CD14-positive monocyte (primary cell): ENCODE measurements at regions of chr6 and their contacts with region 1.

Region 1: DNA sequence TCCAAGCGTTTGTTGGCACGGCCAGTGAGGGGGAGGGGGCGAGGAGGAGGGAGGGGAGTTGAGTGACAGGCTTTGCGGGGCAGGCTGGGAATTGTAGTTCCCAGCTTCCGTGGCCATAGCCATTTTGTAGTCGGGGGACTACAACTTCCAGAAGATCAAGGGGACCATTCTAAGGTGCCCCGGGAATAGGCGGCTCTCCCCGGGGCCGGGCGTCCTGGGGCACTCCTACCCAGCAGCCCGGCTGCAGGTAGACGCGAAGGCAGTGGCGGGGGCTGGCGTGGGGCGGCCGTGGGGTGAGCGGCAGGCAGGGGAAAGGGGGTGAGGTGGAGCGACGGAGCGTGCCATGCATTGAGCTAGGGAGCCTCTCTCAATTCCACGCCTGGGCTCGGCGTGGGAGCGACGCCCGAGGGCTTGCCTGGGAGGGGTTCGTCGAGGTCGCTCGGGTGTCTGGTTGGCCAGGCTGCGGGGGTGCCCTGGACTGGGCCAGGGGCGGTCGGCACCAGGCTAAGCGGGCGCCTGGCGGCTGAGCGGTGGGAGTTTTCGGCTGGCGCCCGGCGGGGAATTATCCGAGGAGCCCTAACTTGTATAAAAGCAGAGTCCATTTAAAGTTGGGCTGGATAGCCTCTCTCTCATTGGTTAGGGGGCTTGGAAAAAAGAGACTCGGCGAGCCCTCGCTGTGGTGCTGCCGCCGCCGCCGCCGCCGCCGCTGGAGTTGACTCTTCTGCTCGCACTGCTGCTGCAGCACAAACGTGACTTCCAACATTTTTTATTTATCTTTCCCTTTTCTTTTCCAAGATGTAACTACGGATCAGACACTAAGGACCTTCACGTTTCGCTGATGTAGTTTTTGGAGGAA is at the start of gene JARID2:
- DNase-seq: peak; percentile 97 to 98 (median 98)
- H3K4me3 ChIP-seq: peak within 1 kb of the TSS; percentile 90 to 100 (median 98)
- H3K4me3 Mint-ChIP-seq: peak within 1 kb of the TSS; percentile 99 to 100
- H3K27ac ChIP-seq: peak within 1 kb of the TSS; percentile 71 to 90
- H3K27ac Mint-ChIP-seq: peak within 1 kb of the TSS; percentile 96 to 99 (median 98)
- H3K4me1 ChIP-seq: peaks cover 33 to 44% of the 10 kb centered on the region in 2 donors
- H3K4me1 Mint-ChIP-seq: peaks cover 25% of the 10 kb centered on the region
- H3K27me3 ChIP-seq: no peaks in the 10 kb centered on the region
- H3K27me3 Mint-ChIP-seq: no peaks in the 10 kb centered on the region
- CTCF ChIP-seq: no peak
- polyA plus RNA-seq, gene JARID2: 6.8 to 17.5 (median 12.5) TPM

Region 2: GRCh38 chr6:15207923-15208322 is 37.7 kb before region 1 on chr6:
- intact Hi-C with region 1: loop called in 1 of 2 experiments (anchors 5 kb)
- DNase-seq: peak in 1 of 3 donors; percentile 56
- H3K4me3 ChIP-seq: no peak overlapping the region
- H3K4me3 Mint-ChIP-seq: no peak overlapping the region
- H3K27ac ChIP-seq: peak overlapping the region in 1 of 2 donors; percentile 12
- H3K27ac Mint-ChIP-seq: peak overlapping the region in 5 of 7 donors; percentile 33 to 79 (median 71)
- H3K4me1 ChIP-seq: peaks cover 13 to 23% of the 10 kb centered on the region in 2 donors
- H3K4me1 Mint-ChIP-seq: peaks cover 25% of the 10 kb centered on the region
- H3K27me3 ChIP-seq: no peaks in the 10 kb centered on the region
- H3K27me3 Mint-ChIP-seq: peaks cover 0 to 6% (median 0%) of the 10 kb centered on the region in 3 donors
- CTCF ChIP-seq: no peak

Region 3: DNA sequence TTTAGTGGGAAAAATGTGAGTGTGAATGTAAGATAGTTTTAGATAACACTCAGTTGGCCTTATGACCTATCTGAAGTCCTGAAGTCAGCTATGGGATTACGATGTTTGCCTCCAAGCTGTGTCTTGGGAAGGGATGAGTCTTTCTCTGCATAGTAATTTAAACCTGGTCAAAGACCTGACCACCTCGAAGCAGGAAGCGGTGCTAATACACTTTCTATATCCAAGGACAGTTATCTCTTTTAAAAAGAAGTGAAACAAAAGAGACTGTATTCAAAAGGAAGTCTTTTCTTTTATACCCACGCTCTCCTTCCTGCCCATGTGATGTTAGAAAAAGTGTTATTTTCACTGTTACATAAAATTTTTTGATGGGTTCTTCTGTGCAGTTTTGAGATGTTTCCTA is 95.2 kb after region 1 on chr6:
- intact Hi-C with region 1: no loop called
- DNase-seq: no peak
- H3K4me3 ChIP-seq: peak overlapping the region in 1 of 3 experiments; percentile 57
- H3K4me3 Mint-ChIP-seq: peak overlapping the region in 1 of 2 donors; percentile 86
- H3K27ac ChIP-seq: peak overlapping the region in 1 of 2 donors; percentile 68
- H3K27ac Mint-ChIP-seq: peak overlapping the region; percentile 42 to 84 (median 54)
- H3K4me1 ChIP-seq: peaks cover 80 to 95% of the 10 kb centered on the region in 2 donors
- H3K4me1 Mint-ChIP-seq: peaks cover 90% of the 10 kb centered on the region
- H3K27me3 ChIP-seq: no peaks in the 10 kb centered on the region
- H3K27me3 Mint-ChIP-seq: peaks cover 0 to 2% (median 0%) of the 10 kb centered on the region in 3 donors
- CTCF ChIP-seq: no peak